Breast epithelium (tissue), 4 donors: ENCODE measurements at regions of chr13 and their contacts with region 1.

Region 1: GRCh38 chr13:111011899-111012298 is 97.0 kb upstream of the ANKRD10 start:
- DNase-seq: no peak
- H3K4me3 ChIP-seq: no peak overlapping the region
- H3K27ac ChIP-seq: no peak overlapping the region
- H3K4me1 ChIP-seq: peaks cover 0 to 2% of the 10 kb centered on the region in 2 donors
- H3K27me3 ChIP-seq: no peaks in the 10 kb centered on the region
- CTCF ChIP-seq: no peak
- POLR2A ChIP-seq: no peak

Region 2: GRCh38 chr13:110580800-110581199 is 431.1 kb before region 1 on chr13:
- intact Hi-C with region 1: loop called (anchors 5 kb)
- DNase-seq: no peak
- H3K4me3 ChIP-seq: no peak overlapping the region
- H3K27ac ChIP-seq: no peak overlapping the region
- H3K4me1 ChIP-seq: no peaks in the 10 kb centered on the region
- H3K27me3 ChIP-seq: no peaks in the 10 kb centered on the region
- CTCF ChIP-seq: no peak
- POLR2A ChIP-seq: no peak

Region 3: GRCh38 chr13:110965038-110965754 is 46.7 kb before region 1 on chr13:
- intact Hi-C with region 1: no loop called
- DNase-seq: no peak
- H3K4me3 ChIP-seq: no peak overlapping the region
- H3K27ac ChIP-seq: no peak overlapping the region
- H3K4me1 ChIP-seq: no peaks in the 10 kb centered on the region
- H3K27me3 ChIP-seq: no peaks in the 10 kb centered on the region
- CTCF ChIP-seq: no peak
- POLR2A ChIP-seq: no peak

Region 4: GRCh38 chr13:111460548-111461444 is 448.9 kb after region 1 on chr13:
- intact Hi-C with region 1: no loop called
- DNase-seq: peak in 1 of 2 donors; percentile 23
- H3K4me3 ChIP-seq: no peak overlapping the region
- H3K27ac ChIP-seq: no peak overlapping the region
- H3K4me1 ChIP-seq: no peaks in the 10 kb centered on the region
- H3K27me3 ChIP-seq: peaks cover 0 to 40% of the 10 kb centered on the region in 2 donors
- CTCF ChIP-seq: peak in 1 of 3 donors; percentile 45
- POLR2A ChIP-seq: no peak